Activated T-helper 1 cell treated with anti-CD3 and anti-CD28 coated beads, Interleukin-12 subunit alpha, Interleukin-12 subunit beta, Interleukin-2, Interleukin-4 antibody, amounts not matched to agents 30 ng/mL and 10 ng/mL and 1 ng/mL, durations not matched to agents 14 hours and 24 hours and 36 hours (primary cell): ENCODE measurements at regions of chr7 and their contacts with region 1.

Region 1: GRCh38 chr7:106405697-106406141 is 120.9 kb upstream of the NAMPT start:
- DNase-seq: no peak
- H3K4me3 Mint-ChIP-seq: no peak overlapping the region
- H3K27ac Mint-ChIP-seq: peak overlapping the region; percentile 30
- H3K4me1 Mint-ChIP-seq: peaks cover 23% of the 10 kb centered on the region
- H3K27me3 Mint-ChIP-seq: peaks cover 23% of the 10 kb centered on the region

Region 2: GRCh38 chr7:106255246-106255645 is 150.5 kb before region 1 on chr7:
- intact Hi-C with region 1: loop called (anchors 1 kb)
- DNase-seq: no peak
- H3K4me3 Mint-ChIP-seq: no peak overlapping the region
- H3K27ac Mint-ChIP-seq: peak overlapping the region; percentile 44
- H3K4me1 Mint-ChIP-seq: peaks cover 46% of the 10 kb centered on the region
- H3K27me3 Mint-ChIP-seq: no peaks in the 10 kb centered on the region

Region 3: DNA sequence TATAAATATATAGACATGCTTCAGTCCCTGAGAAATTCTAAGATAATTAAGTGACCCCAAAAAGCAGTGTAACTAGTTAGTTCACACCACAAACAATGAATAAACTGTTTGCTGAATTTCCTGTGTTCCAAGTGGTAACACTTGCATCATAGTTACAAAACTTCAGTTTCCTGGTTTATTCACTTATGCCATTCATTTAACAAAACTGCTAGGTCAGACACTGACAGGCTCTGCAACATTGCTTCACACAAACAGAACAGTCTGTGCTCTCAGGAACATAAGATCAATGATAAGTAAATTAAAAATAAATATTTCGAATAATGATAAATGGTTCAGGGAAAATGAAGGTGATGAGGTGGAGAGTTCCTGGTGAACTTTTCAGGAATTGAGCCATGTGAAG is 12.4 kb after region 1 on chr7:
- intact Hi-C with region 1: loop called (anchors 1 kb)
- DNase-seq: no peak
- H3K4me3 Mint-ChIP-seq: peak overlapping the region; percentile 5
- H3K27ac Mint-ChIP-seq: peak overlapping the region; percentile 73
- H3K4me1 Mint-ChIP-seq: peaks cover 55% of the 10 kb centered on the region
- H3K27me3 Mint-ChIP-seq: peaks cover 3% of the 10 kb centered on the region

Region 4: DNA sequence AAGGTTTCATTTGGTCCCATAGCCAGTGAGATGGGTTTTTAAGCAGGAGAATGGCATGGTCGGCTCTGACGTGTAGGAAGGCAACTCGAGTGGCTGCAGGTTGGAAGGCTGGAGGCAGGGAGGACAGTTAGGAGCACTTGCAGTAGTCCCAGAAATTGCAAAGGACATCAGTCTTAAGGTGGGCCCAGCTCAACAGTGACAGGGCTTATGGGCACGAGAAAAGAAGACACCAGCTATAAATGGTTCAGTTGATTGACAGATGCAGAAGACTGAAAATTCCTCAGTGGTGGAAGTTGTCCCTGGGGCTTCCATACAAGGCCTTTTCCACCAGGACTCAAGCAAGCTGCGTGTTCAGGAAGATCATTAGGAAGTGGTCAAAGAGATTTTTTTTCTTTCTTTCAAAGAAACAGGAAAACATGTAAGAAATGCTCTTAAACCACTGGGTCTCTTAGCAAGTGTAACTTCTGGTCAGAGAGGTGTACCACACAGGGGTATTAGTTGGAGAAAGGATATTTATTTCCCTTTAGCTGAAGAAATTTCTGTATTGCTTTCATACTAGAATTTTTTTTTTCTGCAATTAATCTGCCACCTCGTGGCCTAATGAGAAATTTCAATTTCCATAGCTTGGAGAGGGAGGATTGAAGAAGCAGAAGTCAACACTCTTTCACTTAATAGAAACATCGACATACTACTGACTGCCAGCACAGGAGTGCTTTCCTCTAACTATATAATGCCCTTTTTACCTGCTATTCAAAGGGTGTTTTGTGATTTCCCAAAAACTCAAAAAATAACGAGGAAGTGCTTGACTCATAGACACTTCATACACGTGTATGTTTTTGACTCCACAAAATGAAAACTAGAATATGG is 56.5 kb after region 1 on chr7:
- intact Hi-C with region 1: loop called (anchors 1 kb)
- DNase-seq: no peak
- H3K4me3 Mint-ChIP-seq: no peak overlapping the region
- H3K27ac Mint-ChIP-seq: no peak overlapping the region
- H3K4me1 Mint-ChIP-seq: peaks cover 30% of the 10 kb centered on the region
- H3K27me3 Mint-ChIP-seq: no peaks in the 10 kb centered on the region

Region 5: GRCh38 chr7:106717955-106718871 is 312.5 kb after region 1 on chr7:
- intact Hi-C with region 1: loop called (anchors 1 kb)
- DNase-seq: peak; percentile 37
- H3K4me3 Mint-ChIP-seq: no peak overlapping the region
- H3K27ac Mint-ChIP-seq: no peak overlapping the region
- H3K4me1 Mint-ChIP-seq: peaks cover 11% of the 10 kb centered on the region
- H3K27me3 Mint-ChIP-seq: no peaks in the 10 kb centered on the region

Region 6: DNA sequence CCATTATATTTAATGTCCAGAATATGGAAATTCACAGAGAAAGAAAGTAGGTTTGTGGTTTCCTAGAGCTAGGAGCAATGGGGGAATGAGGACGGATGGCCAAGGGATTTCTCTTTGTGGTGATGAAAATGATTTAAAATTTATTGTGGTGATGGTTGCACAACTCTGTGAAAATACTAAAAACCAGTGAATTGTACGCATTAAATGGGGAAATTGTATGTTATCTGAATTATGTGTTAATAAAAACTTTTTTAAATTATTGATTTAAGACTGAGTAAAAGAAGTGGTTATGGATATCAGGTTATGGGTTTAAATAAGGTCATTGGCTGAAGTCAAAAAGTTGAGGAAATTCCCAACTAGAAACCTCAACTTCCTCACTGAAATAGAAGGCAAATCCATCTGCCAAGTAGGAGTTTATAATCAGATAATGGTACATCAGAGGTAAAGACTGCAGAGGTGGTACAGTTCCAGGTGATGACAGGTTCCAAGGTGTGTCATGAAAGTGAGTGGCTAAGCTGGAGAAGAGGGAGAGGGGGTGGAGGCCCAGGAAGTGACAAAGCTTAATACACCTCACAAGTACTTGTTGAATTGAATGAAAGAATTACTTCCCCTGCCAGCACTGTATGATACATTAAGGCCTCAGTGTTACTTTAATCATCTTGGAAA is 324.1 kb after region 1 on chr7:
- intact Hi-C with region 1: no loop called
- DNase-seq: no peak
- H3K4me3 Mint-ChIP-seq: no peak overlapping the region
- H3K27ac Mint-ChIP-seq: no peak overlapping the region
- H3K4me1 Mint-ChIP-seq: peaks cover 36% of the 10 kb centered on the region
- H3K27me3 Mint-ChIP-seq: peaks cover 2% of the 10 kb centered on the region